Cardiac septum (tissue), 1 donor: ENCODE measurements at regions of chr12 and their contacts with region 1.

Region 1: DNA sequence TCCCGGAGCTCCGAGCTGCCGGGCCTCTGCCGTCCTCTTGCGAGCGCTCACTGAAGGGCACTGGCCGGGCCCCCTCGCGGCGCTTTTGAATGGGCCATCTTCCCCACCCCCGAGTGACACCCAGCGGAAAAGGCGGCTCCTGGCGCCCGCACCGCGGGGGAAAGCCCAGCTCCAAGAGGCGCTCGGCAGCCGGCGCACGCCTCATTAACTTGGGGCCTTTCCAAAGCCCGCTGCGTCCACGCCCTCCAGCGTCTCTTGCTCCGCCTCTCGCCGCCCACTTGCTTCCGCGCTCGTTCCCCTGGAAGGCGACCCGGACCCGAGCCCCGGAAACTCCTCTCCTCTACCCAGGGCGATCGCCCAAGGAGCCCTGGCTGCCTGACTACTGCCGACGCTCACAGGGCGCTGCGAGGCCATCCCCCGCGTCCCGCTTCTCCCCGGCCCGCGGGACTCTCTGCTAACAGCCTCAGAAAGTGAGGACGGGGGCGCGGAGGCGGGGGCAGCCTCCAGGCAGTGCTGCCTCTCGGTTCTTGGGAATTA is at the start of gene PHLDA1:
- DNase-seq: peak; percentile 98
- total RNA-seq, gene PHLDA1: 99.4 TPM

Region 2: DNA sequence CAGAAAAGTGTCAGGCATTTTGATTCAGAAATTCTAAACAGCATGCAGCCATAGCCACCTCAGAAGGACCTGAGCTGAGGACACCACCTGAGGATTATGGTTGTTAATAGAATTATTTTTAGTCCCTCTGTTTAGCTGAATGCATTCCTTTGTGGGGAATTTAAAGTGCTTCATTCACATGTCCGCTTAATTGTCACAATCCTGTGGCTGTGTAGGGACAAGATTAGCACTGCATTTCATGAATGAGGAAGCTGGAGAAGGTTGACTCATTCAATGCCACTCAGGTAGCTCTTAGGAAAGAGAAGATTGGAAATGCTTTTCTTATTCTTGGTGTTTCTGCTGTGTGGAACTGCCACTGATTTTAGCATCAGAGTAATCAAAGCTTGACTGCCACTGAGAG is 478.2 kb before region 1 on chr12:
- intact Hi-C with region 1: loop called (anchors 2 kb)
- DNase-seq: no peak

Region 3: GRCh38 chr12:75705749-75706711 is 325.6 kb before region 1 on chr12:
- intact Hi-C with region 1: loop called (anchors 5 kb)
- DNase-seq: peak; percentile 80

Region 4: GRCh38 chr12:75831402-75831801 is 200.2 kb before region 1 on chr12:
- intact Hi-C with region 1: loop called (anchors 5 kb)
- DNase-seq: no peak

Region 5: DNA sequence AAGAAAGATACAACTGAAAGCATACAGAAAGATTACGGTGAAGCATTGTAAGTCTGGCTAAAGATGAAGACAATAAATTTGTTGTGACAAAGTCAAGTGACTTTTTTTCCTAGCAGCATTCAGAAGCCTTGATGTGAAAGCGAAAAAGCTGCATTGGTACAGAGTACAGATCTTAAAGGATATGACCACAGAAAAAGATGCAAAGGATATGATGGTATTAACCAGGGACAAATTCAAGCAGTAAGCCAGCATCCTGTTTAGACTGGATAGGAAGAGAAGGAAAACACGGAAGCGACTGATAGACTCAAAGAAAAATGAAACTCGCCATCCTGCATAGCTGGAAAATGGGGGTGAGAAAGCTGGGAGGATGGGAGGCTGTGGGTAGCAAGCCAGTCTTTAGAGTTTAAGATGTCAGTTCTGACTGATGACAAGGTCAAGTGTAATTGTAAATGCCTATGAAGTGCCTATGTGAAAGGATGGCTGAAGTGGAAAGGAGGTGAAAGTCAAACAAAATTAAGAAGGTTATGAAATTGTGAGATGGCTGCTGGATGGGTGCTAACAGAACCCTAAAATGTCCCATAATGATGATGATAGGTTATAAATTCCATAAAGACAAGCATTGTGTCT is 92.5 kb before region 1 on chr12:
- intact Hi-C with region 1: loop called (anchors 2 kb)
- DNase-seq: no peak

Region 6: DNA sequence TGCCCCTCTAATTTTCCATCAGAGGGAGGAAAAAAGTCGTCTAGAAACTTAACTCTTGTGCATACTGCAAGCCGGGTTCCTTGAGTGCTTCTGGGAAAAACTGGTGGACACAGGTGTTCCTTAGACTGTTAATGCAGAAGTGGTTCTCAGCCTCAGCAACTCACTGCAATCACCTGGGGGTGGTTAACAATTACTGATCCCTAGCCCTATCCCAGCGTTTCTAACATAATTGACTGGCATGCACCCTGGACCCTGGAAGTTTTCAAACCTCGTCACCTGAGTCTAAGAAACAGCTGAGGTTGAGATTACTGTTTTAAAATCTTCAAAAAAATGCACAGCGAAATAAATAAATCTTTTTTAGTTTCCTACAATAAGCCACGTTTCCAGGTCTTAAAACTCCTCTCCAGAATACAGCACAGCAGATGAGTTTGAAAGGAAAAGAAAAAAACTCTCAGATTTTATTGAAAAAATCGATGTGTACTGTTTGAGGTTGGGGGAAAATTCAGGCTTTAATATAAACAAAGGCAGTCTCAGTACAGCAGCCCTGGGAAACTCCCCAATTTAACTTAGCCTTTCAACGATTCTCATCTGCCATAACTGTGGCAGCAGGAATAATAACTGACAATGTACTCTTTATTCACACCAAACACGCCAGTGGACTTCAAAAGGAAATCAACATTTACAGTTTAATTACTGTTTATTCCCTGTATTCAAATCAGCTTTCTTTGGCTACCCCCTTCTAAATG is 45.4 kb before region 1 on chr12:
- intact Hi-C with region 1: no loop called
- DNase-seq: no peak

Region 7: GRCh38 chr12:76083904-76084862 is 52.6 kb after region 1 on chr12 and contains the start of gene NAP1L1:
- intact Hi-C with region 1: loop called (anchors 5 kb)
- DNase-seq: peak; percentile 98
- total RNA-seq, gene NAP1L1: 348 TPM

Region 8: DNA sequence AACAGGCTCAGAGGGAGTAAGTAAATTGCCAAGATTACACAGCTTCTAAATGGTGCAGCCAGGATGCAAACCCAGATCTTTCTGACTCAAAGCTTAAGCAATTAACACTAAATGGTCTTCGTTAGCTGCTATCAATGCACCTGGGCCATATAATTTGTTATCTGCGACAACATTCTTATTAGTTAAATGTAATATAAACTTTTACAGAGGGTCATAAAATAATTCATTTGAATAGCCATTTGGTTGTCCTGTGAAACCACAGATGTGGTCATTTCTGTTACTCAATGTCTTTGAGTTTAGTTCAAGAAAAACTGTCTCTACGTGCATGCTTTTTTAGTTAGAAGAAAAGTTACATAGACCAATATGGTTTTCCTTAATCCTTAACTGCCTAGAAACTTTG is 75.0 kb after region 1 on chr12:
- intact Hi-C with region 1: no loop called
- DNase-seq: no peak

Region 9: GRCh38 chr12:76356094-76356493 is 324.5 kb after region 1 on chr12:
- intact Hi-C with region 1: no loop called
- DNase-seq: no peak